ENCODE measurements at regions of chr4 and their contacts with region 1.

Region 1: DNA sequence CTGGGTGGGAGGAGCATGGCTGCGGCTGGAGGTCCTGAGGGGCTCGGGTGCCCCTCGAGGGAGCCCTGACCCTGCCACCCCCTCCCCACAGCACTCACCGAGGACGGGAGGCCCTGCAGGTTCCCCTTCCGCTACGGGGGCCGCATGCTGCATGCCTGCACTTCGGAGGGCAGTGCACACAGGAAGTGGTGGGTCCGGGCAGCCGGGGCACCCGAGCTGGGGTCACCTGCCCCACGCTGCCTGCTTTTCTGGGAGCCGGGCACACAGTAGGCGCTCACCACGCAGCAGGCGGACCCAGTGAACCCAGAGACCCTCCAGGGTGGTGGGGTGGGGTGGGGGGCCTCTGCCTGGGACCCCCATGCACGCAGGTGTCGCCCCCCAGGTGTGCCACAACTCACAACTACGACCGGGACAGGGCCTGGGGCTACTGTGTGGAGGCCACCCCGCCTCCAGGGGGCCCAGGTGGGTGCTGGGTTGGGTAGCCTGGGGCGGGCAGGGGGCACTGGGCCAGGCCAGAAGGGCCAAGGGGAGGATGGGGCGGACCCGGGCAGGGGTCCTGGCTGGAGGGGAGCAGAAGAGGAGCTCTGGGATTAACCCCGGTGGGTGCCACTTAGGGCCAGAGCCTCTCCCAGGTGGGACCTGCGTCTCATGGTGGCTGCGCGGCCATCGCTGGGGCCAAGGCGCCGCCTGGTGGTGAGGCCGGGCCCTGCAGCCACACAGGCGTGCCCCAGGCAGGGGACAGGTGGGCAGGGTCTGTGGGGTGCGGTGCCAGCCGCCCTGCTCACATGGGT is 1.4 kb downstream of the HGFAC start:
- DNase-seq: peak; percentile 91

Region 2: GRCh38 chr4:3346146-3346545 is 97.0 kb before region 1 on chr4:
- CTCF ChIA-PET with region 1: interaction called, 14 read pairs
- POLR2A ChIA-PET with region 1: no interaction called
- DNase-seq: peak; percentile 78